ENCODE measurements at regions of chr5 and their contacts with region 1.

Region 1: GRCh38 chr5:178237431-178238312 is 5.1 kb upstream of the PHYKPL start:
- DNase-seq: peak in 1 of 10 donors; percentile 49
- ATAC-seq: no peak
- H3K4me3 Mint-ChIP-seq: peak overlapping the region in 8 of 10 donors; percentile 28 to 79 (median 55)
- H3K27ac Mint-ChIP-seq: peak overlapping the region; percentile 70 to 97 (median 85)
- H3K4me1 Mint-ChIP-seq: peaks cover 29 to 86% (median 84%) of the 10 kb centered on the region in 4 donors
- H3K27me3 Mint-ChIP-seq: no peaks in the 10 kb centered on the region

Region 2: DNA sequence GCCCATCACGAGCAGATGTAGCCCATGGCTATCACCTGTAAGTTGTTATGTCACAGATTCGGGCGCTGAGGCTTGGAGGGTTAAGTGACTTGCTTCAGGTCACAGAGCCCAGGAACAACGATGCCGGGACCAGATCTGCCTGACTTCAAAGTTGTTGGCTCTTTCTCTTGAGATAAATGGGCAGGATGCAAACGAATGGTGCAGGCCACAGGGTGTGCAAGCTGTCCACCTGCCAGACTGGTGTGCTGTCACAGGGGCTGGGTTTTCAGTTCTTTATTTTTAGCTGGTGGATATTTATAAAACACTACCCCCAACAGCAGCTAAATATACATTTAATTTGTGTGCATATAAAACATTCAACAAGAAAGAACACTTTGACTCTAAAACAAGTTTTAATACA is 12.6 kb after region 1 on chr5:
- POLR2A ChIA-PET with region 1: interaction called, 12 read pairs
- DNase-seq: no peak
- ATAC-seq: no peak
- H3K4me3 Mint-ChIP-seq: peak overlapping the region in 5 of 10 donors; percentile 4 to 75 (median 52)
- H3K27ac Mint-ChIP-seq: peak overlapping the region; percentile 19 to 99 (median 70)
- H3K4me1 Mint-ChIP-seq: peaks cover 17 to 50% (median 44%) of the 10 kb centered on the region in 4 donors
- H3K27me3 Mint-ChIP-seq: peaks cover 0 to 1% (median 0%) of the 10 kb centered on the region in 5 donors